ENCODE measurements at regions of chr10 and their contacts with region 1.

Region 1: DNA sequence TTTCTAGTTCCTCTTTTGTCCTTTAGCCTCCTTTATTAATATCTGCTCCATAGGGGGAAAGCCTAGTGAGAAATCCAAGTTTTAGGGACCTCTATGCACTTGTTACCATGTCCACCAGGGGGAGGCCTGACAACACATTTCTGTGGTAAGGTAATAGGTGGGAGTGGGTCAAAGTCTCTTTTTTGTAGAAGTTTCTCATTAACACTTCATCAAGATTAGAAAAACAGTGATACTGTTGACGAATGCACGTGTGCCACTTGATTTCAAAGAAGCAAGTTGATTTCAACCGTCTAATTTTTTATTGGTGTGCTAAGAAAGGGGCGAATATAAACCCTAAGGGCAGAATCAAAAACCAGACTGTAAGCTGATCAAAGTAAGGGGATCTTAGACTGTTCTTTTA is 30.6 kb downstream of the CISD1 start:
- DNase-seq: peak; percentile 38
- ATAC-seq: peak; percentile 96
- H3K4me3 ChIP-seq: no peak overlapping the region
- H3K27ac ChIP-seq: no peak overlapping the region
- H3K4me1 ChIP-seq: no peaks in the 10 kb centered on the region
- H3K27me3 ChIP-seq: peaks cover 14% of the 10 kb centered on the region; the same call in 1 of the 2 replicates
- CTCF ChIP-seq: peak; percentile 65 to 95 (median 87); a peak in 5 of 6 replicates
- POLR2A ChIP-seq: no peak
- RAD21 ChIP-seq: peak; percentile 78

Region 2: DNA sequence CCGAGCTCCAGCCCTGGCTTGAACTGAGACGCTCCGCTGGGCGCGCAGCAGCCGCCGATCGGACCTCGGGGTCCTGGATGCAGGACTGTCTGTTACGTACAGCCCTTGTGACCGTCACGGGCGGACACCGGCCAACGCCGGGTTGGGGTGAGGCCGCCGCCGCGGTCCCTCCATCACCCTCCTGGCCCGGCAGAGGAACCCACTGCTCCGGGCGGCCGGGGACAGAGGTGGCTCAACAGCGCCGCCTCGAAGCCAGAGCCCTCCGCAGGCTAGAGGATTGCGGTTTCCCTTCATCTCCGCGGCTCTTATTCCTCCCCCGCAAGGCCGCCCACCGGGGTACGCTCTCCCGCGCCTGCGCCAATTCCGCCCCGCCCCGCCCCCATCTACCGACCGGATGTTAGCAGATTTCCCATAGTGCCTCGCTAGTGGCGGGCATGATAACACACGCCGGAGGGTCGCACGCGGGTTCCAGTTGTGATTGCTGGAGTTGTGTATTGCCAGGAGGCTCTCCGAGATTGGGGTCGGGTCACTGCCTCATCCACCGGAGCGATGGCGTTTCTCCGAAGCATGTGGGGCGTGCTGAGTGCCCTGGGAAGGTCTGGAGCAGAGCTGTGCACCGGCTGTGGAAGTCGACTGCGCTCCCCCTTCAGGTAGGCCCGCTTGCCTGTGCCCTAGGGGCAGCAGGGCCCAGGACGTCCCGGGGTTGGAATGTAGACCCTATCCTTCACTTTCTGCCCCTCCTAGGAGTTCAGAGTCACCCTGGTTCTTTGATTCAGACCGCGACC is 85.6 kb after region 1 on chr10 and contains the start of gene TFAM:
- CTCF ChIA-PET with region 1: interaction called, 10 read pairs
- POLR2A ChIA-PET with region 1: no interaction called
- RAD21 ChIA-PET with region 1: interaction called in 1 of 2 experiments, 3 read pairs
- intact Hi-C with region 1: loop called (anchors 2 kb)
- DNase-seq: peak; percentile 81
- ATAC-seq: peak; percentile 91
- H3K4me3 ChIP-seq: peak within 1 kb of the TSS; percentile 93 to 94
- H3K27ac ChIP-seq: peak within 1 kb of the TSS; percentile 93
- H3K4me1 ChIP-seq: peaks cover 12 to 14% of the 10 kb centered on the region in 2 experiments
- H3K27me3 ChIP-seq: no peaks in the 10 kb centered on the region
- CTCF ChIP-seq: peak; percentile 45 to 58 (median 58); a peak in 5 of 6 replicates
- POLR2A ChIP-seq: peak; percentile 95
- RAD21 ChIP-seq: peak; percentile 66
- total RNA-seq, gene TFAM: 57.6 TPM

Region 3: GRCh38 chr10:58451193-58451889 is 151.8 kb after region 1 on chr10:
- CTCF ChIA-PET with region 1: no interaction called
- POLR2A ChIA-PET with region 1: no interaction called
- RAD21 ChIA-PET with region 1: no interaction called
- intact Hi-C with region 1: no loop called
- DNase-seq: no peak
- ATAC-seq: no peak
- H3K4me3 ChIP-seq: no peak overlapping the region
- H3K27ac ChIP-seq: no peak overlapping the region
- H3K4me1 ChIP-seq: no peaks in the 10 kb centered on the region
- H3K27me3 ChIP-seq: no peaks in the 10 kb centered on the region
- CTCF ChIP-seq: no peak
- POLR2A ChIP-seq: no peak
- RAD21 ChIP-seq: no peak

Region 4: GRCh38 chr10:58641095-58641531 is 341.5 kb after region 1 on chr10:
- CTCF ChIA-PET with region 1: no interaction called
- POLR2A ChIA-PET with region 1: no interaction called
- RAD21 ChIA-PET with region 1: no interaction called
- intact Hi-C with region 1: loop called (anchors 1 kb)
- DNase-seq: peak; percentile 18
- ATAC-seq: peak; percentile 32; the same call in 1 of the 2 replicates
- H3K4me3 ChIP-seq: no peak overlapping the region
- H3K27ac ChIP-seq: no peak overlapping the region
- H3K4me1 ChIP-seq: no peaks in the 10 kb centered on the region
- H3K27me3 ChIP-seq: peaks cover 13% of the 10 kb centered on the region; the same call in 1 of the 2 replicates
- CTCF ChIP-seq: peak in 2 of 3 experiments; percentile 29 to 42; a peak in 4 of 6 replicates
- POLR2A ChIP-seq: no peak
- RAD21 ChIP-seq: peak; percentile 56